ENCODE measurements at regions of chr4 and their contacts with region 1.

Region 1: GRCh38 chr4:109433205-109434006 is at the start of gene SEC24B:
- DNase-seq: peak; percentile 78 to 95 (median 91)
- ATAC-seq: peak; percentile 92
- H3K4me3 ChIP-seq: peak within 1 kb of the TSS; percentile 72
- H3K4me3 Mint-ChIP-seq: peak within 1 kb of the TSS; percentile 90
- H3K27ac ChIP-seq: peak within 1 kb of the TSS; percentile 73 to 90
- H3K27ac Mint-ChIP-seq: peak within 1 kb of the TSS; percentile 95
- H3K4me1 ChIP-seq: peaks cover 29% of the 10 kb centered on the region
- H3K4me1 Mint-ChIP-seq: peaks cover 49% of the 10 kb centered on the region
- H3K27me3 ChIP-seq: no peaks in the 10 kb centered on the region
- H3K27me3 Mint-ChIP-seq: no peaks in the 10 kb centered on the region
- CTCF ChIP-seq: peak; percentile 97
- total RNA-seq, gene SEC24B: 40.6 to 42.9 TPM

Region 2: DNA sequence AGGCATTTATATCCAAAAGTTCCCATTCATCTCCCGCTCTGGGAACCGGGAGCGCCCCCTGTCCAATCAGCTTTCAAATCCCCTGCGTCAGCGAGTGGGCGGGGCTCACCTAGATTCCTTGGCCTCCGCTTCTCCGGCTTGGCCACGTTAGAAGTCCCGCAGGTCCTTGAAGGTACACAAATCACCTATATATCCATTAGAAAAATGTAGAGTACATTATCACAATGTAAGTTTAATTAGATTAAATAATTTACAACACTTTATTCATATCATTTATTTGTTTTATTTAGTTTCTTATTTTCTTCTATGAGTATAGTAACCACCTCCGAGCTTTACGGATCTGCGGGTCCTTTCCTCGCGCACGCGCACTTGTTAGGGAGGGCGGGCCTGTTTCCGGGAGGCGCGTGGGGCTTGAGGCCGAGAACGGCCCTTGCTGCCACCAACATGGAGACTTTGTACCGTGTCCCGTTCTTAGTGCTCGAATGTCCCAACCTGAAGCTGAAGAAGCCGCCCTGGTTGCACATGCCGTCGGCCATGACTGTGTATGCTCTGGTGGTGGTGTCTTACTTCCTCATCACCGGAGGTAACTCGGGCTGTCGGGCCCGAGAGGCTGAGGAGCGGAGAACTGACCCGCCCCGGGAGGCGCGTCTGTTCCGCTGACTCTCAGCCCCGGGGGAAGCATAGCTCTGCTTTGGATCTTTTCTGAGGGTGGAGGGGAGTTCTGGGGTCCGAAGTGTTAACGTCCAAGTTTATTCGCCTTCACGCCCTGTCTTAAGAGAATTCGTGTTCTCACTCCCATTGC is 783.0 kb before region 1 on chr4 and contains the start of gene OSTC:
- CTCF ChIA-PET with region 1: no interaction called
- POLR2A ChIA-PET with region 1: no interaction called
- intact Hi-C with region 1: loop called in 1 of 2 experiments (anchors 1 kb)
- DNase-seq: peak; percentile 81 to 96 (median 93)
- ATAC-seq: peak; percentile 89
- H3K4me3 ChIP-seq: peak within 1 kb of the TSS; percentile 83 to 98
- H3K4me3 Mint-ChIP-seq: peak within 1 kb of the TSS; percentile 93
- H3K27ac ChIP-seq: peak within 1 kb of the TSS; percentile 93 to 94
- H3K27ac Mint-ChIP-seq: peak within 1 kb of the TSS; percentile 98
- H3K4me1 ChIP-seq: peaks cover 23% of the 10 kb centered on the region
- H3K4me1 Mint-ChIP-seq: peaks cover 40% of the 10 kb centered on the region
- H3K27me3 ChIP-seq: no peaks in the 10 kb centered on the region
- H3K27me3 Mint-ChIP-seq: no peaks in the 10 kb centered on the region
- CTCF ChIP-seq: no peak
- total RNA-seq, gene OSTC: 25.6 to 28.1 TPM

Region 3: DNA sequence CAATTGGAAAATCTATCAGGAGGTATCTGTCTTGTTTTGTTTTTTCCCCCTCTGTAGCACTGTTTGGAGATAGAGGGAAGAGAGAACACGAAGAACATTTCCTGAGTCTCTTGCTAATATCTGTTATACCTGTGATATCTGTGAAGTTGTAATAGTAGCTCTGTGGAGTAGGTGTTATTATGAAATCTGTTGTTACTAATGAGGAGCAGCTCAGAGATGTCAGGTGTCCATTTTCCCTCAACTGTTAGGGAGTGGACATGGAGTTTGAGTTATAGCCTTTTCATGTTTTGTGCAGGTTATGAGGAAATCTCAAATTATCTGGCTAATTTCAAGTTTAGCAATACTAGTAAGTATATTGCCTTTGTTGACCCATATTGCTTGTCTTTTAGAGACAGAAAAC is 52.6 kb after region 1 on chr4:
- CTCF ChIA-PET with region 1: no interaction called
- POLR2A ChIA-PET with region 1: no interaction called
- intact Hi-C with region 1: loop called in 1 of 2 experiments (anchors 5 kb)
- DNase-seq: no peak
- ATAC-seq: no peak
- H3K4me3 ChIP-seq: no peak overlapping the region
- H3K4me3 Mint-ChIP-seq: no peak overlapping the region
- H3K27ac ChIP-seq: no peak overlapping the region
- H3K27ac Mint-ChIP-seq: no peak overlapping the region
- H3K4me1 ChIP-seq: no peaks in the 10 kb centered on the region
- H3K4me1 Mint-ChIP-seq: peaks cover 26% of the 10 kb centered on the region
- H3K27me3 ChIP-seq: no peaks in the 10 kb centered on the region
- H3K27me3 Mint-ChIP-seq: no peaks in the 10 kb centered on the region
- CTCF ChIP-seq: no peak

Region 4: DNA sequence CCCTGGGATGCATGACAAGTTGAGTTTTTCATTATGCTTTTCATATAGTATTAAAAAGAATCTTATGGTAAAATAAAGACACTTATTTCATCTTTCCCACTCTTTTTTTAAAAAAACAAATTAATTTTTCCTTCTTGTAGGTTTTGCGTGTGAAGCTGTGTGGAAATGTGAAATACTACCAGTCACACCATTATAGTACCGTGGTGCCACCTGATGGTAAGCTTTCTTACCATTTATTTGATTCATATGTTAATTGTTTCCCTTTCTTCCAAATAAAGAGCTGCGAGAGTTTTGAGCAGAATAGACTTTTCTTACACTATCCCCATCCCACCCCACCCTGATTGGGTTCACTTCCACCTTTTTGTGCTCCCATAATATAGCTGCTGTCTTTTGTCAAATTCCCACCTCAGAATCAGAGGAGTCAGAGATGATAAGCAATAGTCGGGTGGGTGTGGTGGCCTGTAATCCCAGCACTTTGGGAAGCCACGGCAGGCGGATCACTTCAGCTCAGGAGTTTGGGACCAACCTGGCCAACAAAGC is 225.5 kb after region 1 on chr4:
- CTCF ChIA-PET with region 1: interaction called, 7 read pairs
- POLR2A ChIA-PET with region 1: no interaction called
- intact Hi-C with region 1: loop called (anchors 2 kb)
- DNase-seq: peak in 3 of 9 experiments; percentile 27 to 53 (median 45)
- ATAC-seq: peak; percentile 58
- H3K4me3 ChIP-seq: no peak overlapping the region
- H3K4me3 Mint-ChIP-seq: no peak overlapping the region
- H3K27ac ChIP-seq: no peak overlapping the region
- H3K27ac Mint-ChIP-seq: peak overlapping the region; percentile 3
- H3K4me1 ChIP-seq: peaks cover 35% of the 10 kb centered on the region
- H3K4me1 Mint-ChIP-seq: peaks cover 59% of the 10 kb centered on the region
- H3K27me3 ChIP-seq: no peaks in the 10 kb centered on the region
- H3K27me3 Mint-ChIP-seq: no peaks in the 10 kb centered on the region
- CTCF ChIP-seq: no peak

Region 5: DNA sequence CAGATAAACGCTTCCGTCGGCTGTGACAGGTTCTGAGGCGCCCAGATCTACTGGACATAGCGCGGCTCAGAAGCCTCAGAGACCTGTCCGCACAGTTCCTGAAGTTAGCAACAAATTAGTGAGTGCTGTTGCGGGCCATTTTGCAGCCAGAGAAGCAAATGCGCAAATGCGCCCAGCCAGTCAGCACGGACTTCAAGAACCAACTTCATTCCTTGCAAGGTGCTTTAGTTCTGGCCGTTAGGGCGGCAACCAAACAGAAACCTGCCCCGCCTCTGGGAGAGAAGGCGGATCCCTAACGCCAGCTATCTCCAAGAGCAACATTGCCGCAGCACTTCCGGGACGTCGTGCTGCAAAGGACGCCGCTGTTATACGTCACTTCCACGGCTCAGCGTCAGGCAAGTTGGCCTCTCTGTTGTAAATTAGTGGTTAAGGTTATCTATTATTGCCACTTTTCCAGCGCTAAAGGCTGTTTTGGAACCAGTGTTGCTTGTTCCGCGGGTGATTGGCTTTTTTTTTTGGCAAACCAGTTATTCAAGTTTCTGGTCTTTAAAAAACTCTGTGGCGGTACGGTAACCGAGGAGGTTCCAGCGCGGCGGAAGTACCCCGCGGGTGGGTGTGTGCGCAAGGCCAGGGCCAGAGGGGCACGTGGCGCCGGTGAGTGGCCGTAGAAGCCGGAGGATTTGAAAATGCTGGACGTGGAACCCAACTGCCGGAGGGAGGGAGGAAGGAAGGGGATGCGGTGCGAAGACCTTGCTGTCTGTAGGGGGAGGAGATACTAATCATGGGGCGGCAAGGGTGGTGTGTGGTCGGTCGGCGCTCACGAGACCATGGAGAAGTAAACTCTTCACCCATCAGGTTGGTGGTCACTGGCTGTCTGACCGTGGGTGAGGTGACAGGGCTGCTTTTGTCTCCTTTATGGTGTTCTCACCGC is 382.0 kb after region 1 on chr4 and contains the start of gene GAR1:
- CTCF ChIA-PET with region 1: interaction called, 9 read pairs
- POLR2A ChIA-PET with region 1: interaction called, 4 read pairs
- intact Hi-C with region 1: loop called (anchors 1 kb)
- DNase-seq: peak; percentile 67 to 95 (median 86)
- ATAC-seq: peak; percentile 92
- H3K4me3 ChIP-seq: peak within 1 kb of the TSS; percentile 85 to 87
- H3K4me3 Mint-ChIP-seq: peak within 1 kb of the TSS; percentile 99
- H3K27ac ChIP-seq: peak within 1 kb of the TSS; percentile 96 to 97
- H3K27ac Mint-ChIP-seq: peak within 1 kb of the TSS; percentile 99
- H3K4me1 ChIP-seq: peaks cover 16% of the 10 kb centered on the region
- H3K4me1 Mint-ChIP-seq: peaks cover 43% of the 10 kb centered on the region
- H3K27me3 ChIP-seq: no peaks in the 10 kb centered on the region
- H3K27me3 Mint-ChIP-seq: no peaks in the 10 kb centered on the region
- CTCF ChIP-seq: no peak
- total RNA-seq, gene GAR1: 11.8 to 15.4 TPM